GM10248 (cell line): ENCODE measurements at regions of chr2 and their contacts with region 1.

Region 1: GRCh38 chr2:138501425-138502283 is at the start of gene SPOPL:
- DNase-seq: peak; percentile 94
- CTCF ChIP-seq: no peak

Region 2: DNA sequence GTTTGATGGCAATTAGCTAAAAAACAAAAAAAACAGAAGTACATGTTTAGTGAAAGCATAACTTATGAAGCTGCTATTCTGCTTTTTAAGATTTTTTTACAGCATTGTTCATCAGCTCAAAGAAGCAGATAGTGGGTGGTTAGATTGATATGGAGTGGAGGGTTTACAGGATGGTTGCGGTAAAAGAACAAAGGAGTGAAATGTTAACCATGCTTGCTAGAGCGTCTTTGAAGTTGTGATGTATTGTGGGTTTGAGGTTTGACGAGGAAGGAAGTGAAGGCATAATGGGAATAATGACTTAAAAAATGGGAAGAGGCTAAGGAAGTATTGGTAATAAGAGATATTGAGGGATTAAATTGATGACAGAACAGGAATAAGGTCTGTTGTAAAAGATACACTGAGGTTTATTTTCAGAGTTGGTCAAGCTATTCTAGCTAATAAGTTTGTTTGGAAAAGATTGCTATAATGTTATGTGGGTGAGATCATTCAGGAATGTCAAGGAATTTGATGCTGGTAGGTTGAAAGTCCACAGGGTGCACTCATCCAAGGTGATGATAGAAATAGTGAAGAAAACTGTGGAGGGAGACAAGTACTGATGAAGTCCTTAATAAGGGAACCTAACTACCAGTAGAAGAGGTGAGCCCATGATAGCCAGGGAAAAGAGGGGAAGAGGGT is 14.5 kb after region 1 on chr2:
- CTCF ChIA-PET with region 1: interaction called, 65 read pairs
- POLR2A ChIA-PET with region 1: interaction called, 3 read pairs
- DNase-seq: no peak
- CTCF ChIP-seq: no peak

Region 3: GRCh38 chr2:138522556-138522955 is 20.9 kb after region 1 on chr2:
- CTCF ChIA-PET with region 1: interaction called, 65 read pairs
- POLR2A ChIA-PET with region 1: no interaction called
- DNase-seq: peak; percentile 31
- CTCF ChIP-seq: no peak

Region 4: GRCh38 chr2:138564586-138565241 is 63.1 kb after region 1 on chr2:
- CTCF ChIA-PET with region 1: no interaction called
- POLR2A ChIA-PET with region 1: no interaction called
- DNase-seq: no peak
- CTCF ChIP-seq: no peak